ENCODE measurements at regions of chr16 and their contacts with region 1.

Region 1: DNA sequence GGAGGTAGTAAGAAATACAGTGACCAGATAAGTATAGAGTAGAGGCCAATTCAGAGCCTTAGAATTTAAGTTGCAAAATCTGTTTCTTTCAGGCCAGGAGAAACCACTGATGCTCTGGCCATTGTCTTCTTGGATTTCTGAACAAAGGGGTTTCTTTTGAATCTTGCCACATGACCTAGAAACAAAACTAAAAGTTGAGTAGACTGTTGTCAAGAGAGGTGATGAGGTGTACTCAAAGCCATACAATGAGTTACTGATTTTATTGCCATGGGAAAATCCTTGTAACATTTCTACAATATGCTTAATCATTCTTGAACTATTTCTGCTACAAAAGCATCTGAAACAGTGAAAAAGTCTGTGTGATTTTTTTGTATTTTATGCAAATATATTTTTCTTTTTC is 881.3 kb downstream of the CDH11 start:
- DNase-seq: no peak
- ATAC-seq: no peak
- H3K4me3 ChIP-seq: no peak overlapping the region
- H3K27ac ChIP-seq: no peak overlapping the region
- H3K4me1 ChIP-seq: peaks cover 0 to 10% (median 0%) of the 10 kb centered on the region in 12 donors
- H3K27me3 ChIP-seq: no peaks in the 10 kb centered on the region
- CTCF ChIP-seq: no peak
- POLR2A ChIP-seq: no peak

Region 2: DNA sequence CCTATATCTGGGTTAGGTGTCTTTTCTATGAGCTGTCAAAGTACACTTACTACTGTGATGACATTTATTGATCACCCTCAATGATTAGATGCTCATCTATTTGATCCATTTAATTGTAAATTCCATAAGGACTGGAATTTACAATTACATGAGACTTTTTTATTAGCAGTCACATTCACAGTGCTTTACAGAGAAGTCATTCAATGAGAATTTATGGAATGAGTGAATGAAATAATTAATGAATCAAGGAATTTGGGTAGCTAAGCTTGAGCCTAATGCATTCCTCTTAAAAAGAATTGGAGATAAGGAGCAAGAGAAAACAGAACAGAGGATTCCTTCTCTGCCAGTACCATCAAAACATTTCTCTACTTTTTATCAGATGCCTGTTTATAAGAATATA is 766.9 kb before region 1 on chr16:
- intact Hi-C with region 1: loop called in 1 of 10 experiments (anchors 10 kb)
- DNase-seq: no peak
- ATAC-seq: no peak
- H3K4me3 ChIP-seq: no peak overlapping the region
- H3K27ac ChIP-seq: no peak overlapping the region
- H3K4me1 ChIP-seq: no peaks in the 10 kb centered on the region
- H3K27me3 ChIP-seq: no peaks in the 10 kb centered on the region
- CTCF ChIP-seq: no peak
- POLR2A ChIP-seq: no peak

Region 3: DNA sequence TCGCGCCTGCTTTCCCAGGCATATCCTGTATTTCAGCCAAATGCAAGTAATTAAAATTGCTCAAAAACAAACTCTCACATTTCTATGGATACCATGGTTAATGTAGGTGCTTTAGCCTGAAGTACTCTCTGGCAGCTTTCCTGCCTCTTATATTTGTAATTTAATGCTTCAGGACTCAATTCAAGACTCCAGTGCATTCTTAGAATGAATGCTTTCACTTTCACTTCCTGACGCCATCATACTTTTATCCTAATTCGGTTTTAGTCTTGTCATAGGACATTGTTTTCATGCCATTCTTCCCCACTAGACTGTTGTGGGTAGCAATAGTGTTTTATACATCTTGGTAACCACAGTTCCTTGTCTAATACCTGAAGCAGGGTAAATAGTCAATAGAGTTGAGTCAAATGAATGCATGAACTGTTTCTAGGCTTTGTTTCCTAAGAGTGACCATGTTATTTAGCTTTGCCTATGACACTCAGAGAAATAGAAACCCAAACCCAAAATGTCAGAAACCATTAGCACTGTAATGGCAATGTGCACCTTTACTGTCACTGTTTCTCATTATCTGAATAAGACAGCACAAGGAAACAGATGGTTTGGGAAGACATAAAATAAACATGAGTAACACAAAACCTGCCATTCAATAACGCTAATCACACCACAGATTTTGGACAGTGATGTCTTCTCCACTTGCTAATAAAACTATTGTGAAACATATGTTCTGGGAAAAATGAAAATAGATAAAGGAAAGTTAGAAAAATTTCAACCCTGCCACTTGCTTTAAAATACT is 175.8 kb after region 1 on chr16:
- intact Hi-C with region 1: loop called in 1 of 10 experiments (anchors 10 kb)
- DNase-seq: no peak
- ATAC-seq: peak in 2 of 4 donors; percentile 21 to 30
- H3K4me3 ChIP-seq: peak overlapping the region in 10 of 12 donors; percentile 7 to 49 (median 36)
- H3K27ac ChIP-seq: peak overlapping the region in 5 of 12 donors; percentile 26 to 58 (median 47)
- H3K4me1 ChIP-seq: peaks cover 0 to 36% (median 10%) of the 10 kb centered on the region in 12 donors
- H3K27me3 ChIP-seq: no peaks in the 10 kb centered on the region
- CTCF ChIP-seq: no peak
- POLR2A ChIP-seq: no peak

Measured in heart left ventricle (tissue), 16 donors.